Testis (tissue), 5 donors: ENCODE measurements at regions of chr3 and their contacts with region 1.

Region 1: DNA sequence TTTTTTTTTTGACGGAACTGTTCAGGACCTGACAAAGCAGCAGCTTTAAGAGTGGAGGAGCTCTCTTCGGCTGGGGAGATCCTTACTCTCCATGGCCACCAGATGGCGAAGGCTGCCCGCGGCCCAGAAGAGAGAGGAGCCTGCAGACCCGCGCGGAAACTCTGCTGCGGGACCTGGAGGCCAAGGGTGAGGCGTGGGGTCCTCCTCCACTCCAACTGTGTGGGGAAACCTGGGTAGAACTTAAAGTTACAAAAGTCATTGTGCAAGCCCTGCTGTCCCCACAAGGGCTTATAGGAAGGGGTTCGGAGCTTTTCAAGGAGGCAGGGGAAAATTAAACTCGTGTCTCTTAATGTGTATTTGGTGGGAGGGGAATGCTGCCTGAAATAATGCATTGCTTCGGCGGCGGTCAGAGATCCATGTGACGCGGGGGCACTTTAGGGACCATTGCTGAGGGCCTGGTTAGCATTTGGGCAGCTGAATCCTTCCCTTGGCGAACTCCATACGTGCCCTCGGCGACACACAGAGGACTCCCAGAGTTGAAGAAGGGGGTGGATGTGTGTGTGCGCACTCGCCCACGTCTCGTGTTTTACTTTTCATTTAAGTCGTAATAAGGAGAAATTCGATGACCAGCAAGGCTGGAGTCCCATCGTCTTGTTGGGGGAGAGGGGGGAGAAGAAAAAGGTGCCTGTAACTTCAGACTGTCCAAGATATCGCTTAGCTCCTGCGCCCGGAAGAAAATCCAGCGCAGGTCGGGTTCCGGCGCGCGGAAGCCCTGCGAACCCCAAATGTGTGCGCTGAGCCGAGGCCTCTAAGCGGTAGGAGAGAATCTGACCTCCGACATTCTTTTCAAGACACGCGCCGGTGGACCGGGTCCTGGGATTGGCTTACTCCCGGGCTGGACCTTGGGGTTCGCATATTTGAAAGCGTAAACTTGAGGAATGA is 9.7 kb downstream of the EOMES start:
- DNase-seq: peak; percentile 82
- H3K4me3 ChIP-seq: peak overlapping the region; percentile 51 to 55
- H3K27ac ChIP-seq: peak overlapping the region in 1 of 2 donors; percentile 25
- H3K4me1 ChIP-seq: peaks cover 7% of the 10 kb centered on the region
- H3K27me3 ChIP-seq: no peaks in the 10 kb centered on the region
- CTCF ChIP-seq: peak; percentile 50 to 71 (median 62)
- POLR2A ChIP-seq: no peak

Region 2: GRCh38 chr3:27792869-27793268 is 80.5 kb after region 1 on chr3:
- intact Hi-C with region 1: no loop called
- DNase-seq: no peak
- H3K4me3 ChIP-seq: no peak overlapping the region
- H3K27ac ChIP-seq: no peak overlapping the region
- H3K4me1 ChIP-seq: no peaks in the 10 kb centered on the region
- H3K27me3 ChIP-seq: no peaks in the 10 kb centered on the region
- CTCF ChIP-seq: no peak
- POLR2A ChIP-seq: no peak

Region 3: GRCh38 chr3:28328188-28329151 is 616.1 kb after region 1 on chr3:
- intact Hi-C with region 1: loop called (anchors 5 kb)
- DNase-seq: no peak
- H3K4me3 ChIP-seq: no peak overlapping the region
- H3K27ac ChIP-seq: no peak overlapping the region
- H3K4me1 ChIP-seq: no peaks in the 10 kb centered on the region
- H3K27me3 ChIP-seq: no peaks in the 10 kb centered on the region
- CTCF ChIP-seq: peak; percentile 23 to 76 (median 46)
- POLR2A ChIP-seq: no peak

Region 4: DNA sequence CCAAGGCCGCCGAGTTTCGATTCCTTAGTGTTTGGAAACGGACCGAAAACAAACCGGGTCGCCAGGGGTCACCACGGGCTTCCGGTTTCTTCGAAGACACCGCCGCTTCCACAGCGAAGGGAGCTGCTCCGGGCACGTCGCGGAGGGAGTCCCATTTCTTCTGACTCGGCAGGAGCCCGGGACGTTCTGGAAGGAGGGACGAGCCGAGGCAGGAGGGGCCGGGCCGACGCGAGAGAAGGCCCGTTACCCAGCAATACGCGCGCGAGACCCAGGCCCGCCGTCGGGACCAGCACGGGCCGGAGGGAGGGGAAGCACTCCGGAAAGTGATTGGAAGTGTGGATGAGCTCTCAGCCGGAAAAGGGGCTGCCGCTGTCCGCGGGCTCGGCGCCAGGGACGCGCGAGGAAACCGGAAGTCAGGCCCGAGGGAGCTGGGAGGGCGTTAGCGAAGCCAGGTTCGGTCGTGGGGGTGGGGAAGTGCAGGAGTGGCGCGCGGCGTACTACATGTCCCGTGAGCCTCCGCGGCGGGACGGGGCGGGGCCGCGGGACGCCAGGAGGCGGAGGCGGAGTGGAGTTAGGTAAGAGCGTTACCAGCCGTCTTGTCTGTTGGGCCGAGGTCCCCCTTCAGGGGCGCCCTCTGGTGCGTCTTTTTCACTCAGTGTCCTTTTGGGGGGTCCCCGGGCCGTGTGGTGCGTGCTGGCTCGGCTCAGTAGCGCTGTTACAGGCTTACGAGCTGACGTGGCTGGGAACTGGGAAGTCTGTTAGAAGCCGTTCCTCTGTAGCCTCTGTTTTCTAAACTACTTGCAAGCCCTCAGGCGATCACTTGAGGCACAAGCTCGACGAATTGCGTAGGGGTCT is 636.4 kb after region 1 on chr3 and contains the starts of genes AZI2 and ZCWPW2:
- intact Hi-C with region 1: loop called (anchors 5 kb)
- DNase-seq: peak; percentile 97
- H3K4me3 ChIP-seq: peak within 1 kb of the TSS; percentile 81 to 96
- H3K27ac ChIP-seq: peak within 1 kb of the TSS; percentile 99
- H3K4me1 ChIP-seq: peaks cover 6% of the 10 kb centered on the region
- H3K27me3 ChIP-seq: no peaks in the 10 kb centered on the region
- CTCF ChIP-seq: no peak
- POLR2A ChIP-seq: peak; percentile 77
- total RNA-seq, gene AZI2: 46.6 to 53.8 TPM
- total RNA-seq, gene ZCWPW2: 2.5 to 5.2 TPM